Dorsolateral prefrontal cortex (tissue), 120 donors: ENCODE measurements at regions of chr7 and their contacts with region 1.

Region 1: DNA sequence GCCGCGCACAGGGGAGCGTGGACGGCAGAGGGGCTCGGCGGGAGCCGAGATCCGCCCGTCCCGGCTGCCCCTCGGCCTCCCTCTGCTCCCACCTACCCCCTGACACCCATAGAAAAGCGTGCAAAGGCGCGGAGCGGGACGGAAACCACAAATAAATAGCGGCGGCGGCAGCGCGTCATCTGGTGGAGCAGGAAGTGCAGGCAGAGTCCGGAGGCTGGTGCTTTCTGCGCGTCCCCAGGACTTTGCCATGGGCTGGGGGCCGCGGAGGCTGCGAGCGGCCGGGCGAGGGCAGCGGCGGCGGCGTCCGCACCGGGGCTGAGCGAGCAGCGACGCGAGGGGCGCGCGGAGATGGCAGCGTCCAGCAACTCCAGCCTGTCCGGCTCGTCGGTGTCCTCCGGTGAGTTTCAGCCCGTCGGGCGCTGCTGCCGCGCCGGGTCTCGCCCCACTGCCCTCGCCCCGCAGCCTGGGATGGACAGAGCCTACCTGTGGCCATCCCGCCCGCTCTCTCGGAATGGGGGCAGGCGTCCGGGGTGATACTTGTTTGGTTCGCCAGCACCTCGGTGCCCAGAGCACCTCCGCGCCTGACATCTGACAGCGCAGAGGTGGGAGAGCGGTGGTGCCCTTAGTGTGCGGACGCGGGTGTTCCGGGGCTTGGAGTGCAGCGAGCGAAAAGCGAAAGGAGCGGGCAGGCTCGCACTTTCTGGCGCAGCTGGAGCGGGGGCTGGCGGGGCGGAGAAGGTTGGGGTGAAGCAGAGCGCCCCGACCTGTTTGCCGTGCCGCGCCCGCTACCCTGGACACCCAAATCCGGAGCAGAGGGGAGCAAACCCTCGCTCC is at the start of gene CHN2:
- DNase-seq: peak; percentile 52 to 76 (median 64)
- H3K4me3 ChIP-seq: peak within 1 kb of the TSS; percentile 48 to 94 (median 80)
- H3K27ac ChIP-seq: peak within 1 kb of the TSS in 58 of 59 donors; percentile 20 to 97 (median 82)
- H3K27me3 ChIP-seq: peaks cover 0 to 15% (median 0%) of the 10 kb centered on the region in 45 donors
- CTCF ChIP-seq: peak in 16 of 56 donors; percentile 9 to 39 (median 24)
- total RNA-seq, gene CHN2: 22.0 to 143 (median 61.3) TPM

Region 2: DNA sequence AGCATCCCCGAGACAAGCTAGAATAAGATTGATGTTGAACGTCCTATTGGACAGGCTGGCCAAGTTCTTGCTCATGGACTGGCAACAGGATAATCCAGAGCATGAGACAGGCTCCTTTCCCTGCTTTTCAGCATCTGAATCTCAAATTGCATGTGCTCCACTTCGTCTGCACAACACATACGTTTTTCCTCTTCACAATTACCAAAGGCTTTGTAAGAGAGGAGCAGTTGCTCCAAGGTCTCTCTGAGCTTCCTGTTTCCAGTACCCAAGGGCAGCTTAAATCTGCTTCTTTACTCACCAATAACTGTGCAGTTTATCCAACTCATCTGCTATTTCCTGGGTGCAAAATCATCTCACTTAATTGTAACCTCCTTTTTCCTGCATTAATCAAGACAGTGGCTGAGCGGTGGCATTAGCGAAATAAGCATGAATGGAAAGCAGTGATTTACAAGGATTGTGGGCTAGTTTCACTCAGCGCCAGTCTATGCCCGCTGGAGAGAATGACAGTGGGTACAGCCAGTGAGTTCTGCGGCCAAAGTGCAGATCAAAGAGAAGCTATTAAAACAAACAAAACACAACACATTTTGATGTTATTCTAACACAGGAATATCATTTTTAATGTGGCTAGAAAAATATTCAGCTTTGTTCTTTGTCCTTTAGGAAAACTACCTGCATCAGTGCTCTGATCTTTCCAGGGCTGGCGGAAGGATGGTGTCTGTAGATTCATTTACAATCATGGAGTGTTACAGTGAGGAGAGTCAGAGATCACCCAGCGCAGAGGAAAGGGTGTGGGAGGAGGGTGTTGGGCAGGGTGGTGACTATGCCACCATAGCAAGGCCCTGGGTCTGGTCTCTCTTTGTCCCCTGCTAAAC is 79.6 kb after region 1 on chr7:
- intact Hi-C with region 1: loop called in 1 of 2 experiments (anchors 2 kb)
- DNase-seq: peak in 5 of 10 donors; percentile 46 to 70 (median 51)
- H3K4me3 ChIP-seq: peak overlapping the region in 56 of 59 donors; percentile 1 to 65 (median 40)
- H3K27ac ChIP-seq: peak overlapping the region in 58 of 59 donors; percentile 22 to 94 (median 84)
- H3K27me3 ChIP-seq: no peaks in the 10 kb centered on the region
- CTCF ChIP-seq: peak in 1 of 56 donors; percentile 13

Region 3: DNA sequence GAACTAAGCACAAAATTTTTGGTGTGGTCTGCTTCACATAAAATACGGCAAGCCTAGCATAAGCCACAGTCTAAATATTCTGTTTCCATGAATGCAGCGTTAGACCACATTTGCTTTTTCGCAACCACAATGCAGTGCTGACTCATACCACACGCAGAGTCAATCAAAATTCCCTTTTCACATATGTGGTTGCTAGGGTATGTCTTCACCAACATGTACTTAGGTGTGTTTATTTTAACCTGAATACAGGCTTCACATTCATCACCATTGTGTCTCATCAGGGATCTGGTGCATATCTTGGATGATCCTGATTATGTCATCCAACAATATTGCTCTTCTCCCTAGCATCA is 90.6 kb after region 1 on chr7:
- intact Hi-C with region 1: no loop called
- DNase-seq: no peak
- H3K4me3 ChIP-seq: no peak overlapping the region
- H3K27ac ChIP-seq: peak overlapping the region in 32 of 59 donors; percentile 0 to 98 (median 46)
- H3K27me3 ChIP-seq: no peaks in the 10 kb centered on the region
- CTCF ChIP-seq: no peak